PC-9 (cell line): ENCODE measurements at regions of chr14 and their contacts with region 1.

Region 1: GRCh38 chr14:74437496-74438053 is 11.6 kb upstream of the SYNDIG1L start:
- DNase-seq: peak in 1 of 2 experiments; percentile 32
- H3K4me3 ChIP-seq: no peak overlapping the region
- H3K27ac ChIP-seq: peak overlapping the region; percentile 72
- H3K4me1 ChIP-seq: peaks cover 27% of the 10 kb centered on the region
- H3K27me3 ChIP-seq: no peaks in the 10 kb centered on the region
- CTCF ChIP-seq: no peak

Region 2: GRCh38 chr14:74302634-74303577 is 134.7 kb before region 1 on chr14 and contains the start of gene ABCD4:
- CTCF ChIA-PET with region 1: no interaction called
- POLR2A ChIA-PET with region 1: interaction called, 46 read pairs
- intact Hi-C with region 1: no loop called
- DNase-seq: peak; percentile 96 to 100
- H3K4me3 ChIP-seq: peak within 1 kb of the TSS; percentile 61
- H3K27ac ChIP-seq: peak within 1 kb of the TSS; percentile 35
- H3K4me1 ChIP-seq: peaks cover 16% of the 10 kb centered on the region
- H3K27me3 ChIP-seq: no peaks in the 10 kb centered on the region
- CTCF ChIP-seq: peak; percentile 66; the same call in 1 of the 2 replicates
- total RNA-seq, gene ABCD4: 150 and 179 TPM in 2 replicates

Region 3: DNA sequence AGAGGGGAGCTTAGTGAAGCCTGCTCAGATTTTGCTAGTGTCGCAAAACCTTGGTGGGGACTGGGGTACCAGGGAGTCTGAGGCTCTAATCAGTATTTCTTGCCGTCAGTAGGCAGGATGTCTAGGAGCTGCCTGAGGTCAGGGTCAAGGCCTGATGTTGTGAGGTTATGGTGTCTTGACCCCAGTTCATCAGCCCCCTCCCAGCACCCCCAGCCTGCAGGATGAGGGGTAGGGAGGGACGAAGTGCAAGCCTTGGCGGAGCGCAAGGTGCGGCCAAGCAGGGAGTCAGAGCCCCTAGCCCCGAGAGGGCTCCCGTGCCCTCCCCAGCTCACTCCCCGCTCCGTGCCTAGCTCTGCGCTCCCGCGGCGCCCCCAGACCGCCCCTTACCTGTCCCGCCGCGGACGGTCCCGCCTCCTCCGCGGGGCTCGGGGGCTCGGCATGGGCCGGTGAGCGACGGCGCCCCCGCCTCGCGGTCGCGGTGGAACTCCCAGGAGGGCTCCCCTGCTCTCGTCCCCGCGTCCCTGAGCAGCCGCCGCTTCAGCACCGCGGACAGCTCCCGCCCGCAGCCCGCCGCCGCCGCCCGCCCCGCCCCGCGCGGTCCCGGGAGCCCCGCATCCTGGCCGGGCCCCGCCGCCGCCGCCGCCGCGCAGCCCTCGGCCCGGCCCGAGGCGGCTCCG is 11.9 kb before region 1 on chr14:
- CTCF ChIA-PET with region 1: interaction called, 10 read pairs
- POLR2A ChIA-PET with region 1: no interaction called
- intact Hi-C with region 1: no loop called
- DNase-seq: no peak
- H3K4me3 ChIP-seq: no peak overlapping the region
- H3K27ac ChIP-seq: no peak overlapping the region
- H3K4me1 ChIP-seq: no peaks in the 10 kb centered on the region
- H3K27me3 ChIP-seq: peaks cover 13% of the 10 kb centered on the region; the same call in 1 of the 2 replicates
- CTCF ChIP-seq: no peak

Region 4: GRCh38 chr14:74583689-74584434 is 146.3 kb after region 1 on chr14:
- CTCF ChIA-PET with region 1: no interaction called
- POLR2A ChIA-PET with region 1: no interaction called
- intact Hi-C with region 1: no loop called
- DNase-seq: peak; percentile 83 to 96
- H3K4me3 ChIP-seq: no peak overlapping the region
- H3K27ac ChIP-seq: peak overlapping the region; percentile 52
- H3K4me1 ChIP-seq: peaks cover 61% of the 10 kb centered on the region
- H3K27me3 ChIP-seq: no peaks in the 10 kb centered on the region
- CTCF ChIP-seq: no peak

Region 5: GRCh38 chr14:75369506-75369905 is 931.9 kb after region 1 on chr14:
- CTCF ChIA-PET with region 1: no interaction called
- POLR2A ChIA-PET with region 1: interaction called, 29 read pairs
- intact Hi-C with region 1: no loop called
- DNase-seq: no peak
- H3K4me3 ChIP-seq: no peak overlapping the region
- H3K27ac ChIP-seq: no peak overlapping the region
- H3K4me1 ChIP-seq: no peaks in the 10 kb centered on the region
- H3K27me3 ChIP-seq: peaks cover 23% of the 10 kb centered on the region
- CTCF ChIP-seq: no peak